ENCODE measurements at regions of chrX and their contacts with region 1.

Region 1: GRCh38 chrX:78029663-78030062 is 60.2 kb upstream of the PGAM4 start:
- DNase-seq: peak; percentile 35 to 37
- H3K4me3 ChIP-seq: no peak overlapping the region
- H3K27ac ChIP-seq: no peak overlapping the region
- H3K4me1 ChIP-seq: peaks cover under 1% of the 10 kb centered on the region; the same call in 1 of the 2 replicates
- H3K27me3 ChIP-seq: no peaks in the 10 kb centered on the region
- CTCF ChIP-seq: peak; percentile 77

Region 2: GRCh38 chrX:76555814-76556213 is 1473.8 kb before region 1 on chrX:
- CTCF ChIA-PET with region 1: no interaction called
- POLR2A ChIA-PET with region 1: no interaction called
- intact Hi-C with region 1: loop called (anchors 5 kb)
- DNase-seq: peak in 1 of 2 experiments; percentile 4
- H3K4me3 ChIP-seq: no peak overlapping the region
- H3K27ac ChIP-seq: no peak overlapping the region
- H3K4me1 ChIP-seq: no peaks in the 10 kb centered on the region
- H3K27me3 ChIP-seq: no peaks in the 10 kb centered on the region
- CTCF ChIP-seq: peak; percentile 61